ENCODE measurements at regions of chr17 and their contacts with region 1.

Region 1: GRCh38 chr17:40021451-40021971 is 6.3 kb downstream of the CSF3 start:
- DNase-seq: peak; percentile 56 to 80
- ATAC-seq: peak; percentile 57 to 72
- H3K4me3 ChIP-seq: no peak overlapping the region
- H3K27ac ChIP-seq: peak overlapping the region; percentile 83 to 84
- H3K4me1 ChIP-seq: peaks cover 43% of the 10 kb centered on the region
- CTCF ChIP-seq: no peak
- EP300 ChIP-seq: no peak
- POLR2A ChIP-seq: no peak
- RAD21 ChIP-seq: no peak

Region 2: GRCh38 chr17:39996800-39997199 is 24.7 kb before region 1 on chr17:
- CTCF ChIA-PET with region 1: interaction called, 625 read pairs
- POLR2A ChIA-PET with region 1: no interaction called
- DNase-seq: no peak
- ATAC-seq: no peak
- H3K4me3 ChIP-seq: no peak overlapping the region
- H3K27ac ChIP-seq: no peak overlapping the region
- H3K4me1 ChIP-seq: no peaks in the 10 kb centered on the region
- CTCF ChIP-seq: no peak
- EP300 ChIP-seq: no peak
- POLR2A ChIP-seq: no peak
- RAD21 ChIP-seq: no peak

Region 3: GRCh38 chr17:40005520-40005919 is 16.0 kb before region 1 on chr17:
- CTCF ChIA-PET with region 1: interaction called, 625 read pairs
- POLR2A ChIA-PET with region 1: interaction called, 3 read pairs
- DNase-seq: no peak
- ATAC-seq: 0 out of 6 replicates have a peak, but pooled peaks of 1 of the 2 experiments have one; percentile 32
- H3K4me3 ChIP-seq: no peak overlapping the region
- H3K27ac ChIP-seq: no peak overlapping the region
- H3K4me1 ChIP-seq: no peaks in the 10 kb centered on the region
- CTCF ChIP-seq: no peak
- EP300 ChIP-seq: no peak
- POLR2A ChIP-seq: no peak
- RAD21 ChIP-seq: no peak

Region 4: DNA sequence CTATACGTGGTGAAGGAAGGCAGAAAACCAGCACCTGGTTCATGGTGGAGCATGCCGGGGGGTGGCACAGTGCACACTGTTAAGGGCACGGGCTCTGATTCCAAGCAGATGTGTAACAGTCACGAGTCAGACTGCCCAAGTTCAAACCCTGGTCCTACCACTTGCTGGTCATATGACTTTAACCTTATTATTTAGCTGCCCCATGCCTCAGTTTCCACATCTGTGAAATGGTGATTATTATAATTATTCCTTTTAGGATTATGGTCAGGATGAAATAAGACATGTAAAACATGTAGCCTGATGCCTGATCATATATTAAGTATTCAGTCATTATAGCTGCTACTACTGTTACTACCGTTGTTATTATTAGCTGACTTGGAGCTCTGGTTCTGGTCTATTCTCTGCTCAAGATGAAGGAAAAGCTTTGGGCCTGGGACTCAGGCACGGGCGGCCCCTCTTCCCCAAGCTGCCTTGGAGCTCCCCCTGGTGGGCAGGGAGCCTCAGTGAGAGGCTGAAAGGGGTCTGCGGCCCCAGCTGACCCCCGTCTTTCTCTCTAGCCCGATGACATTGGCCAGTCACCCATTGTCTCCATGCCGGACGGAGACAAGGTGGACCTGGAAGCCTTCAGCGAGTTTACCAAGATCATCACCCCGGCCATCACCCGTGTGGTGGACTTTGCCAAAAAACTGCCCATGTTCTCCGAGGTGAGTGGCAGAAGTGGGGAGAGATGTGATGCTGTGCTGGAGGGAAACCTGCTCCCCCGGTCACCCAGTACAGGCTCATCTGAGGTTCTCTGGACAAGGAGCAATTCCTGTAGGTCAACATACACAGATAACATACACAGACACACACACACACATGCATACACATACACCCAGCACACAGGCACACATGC is 64.9 kb after region 1 on chr17:
- CTCF ChIA-PET with region 1: interaction called, 102 read pairs
- POLR2A ChIA-PET with region 1: no interaction called
- DNase-seq: peak; percentile 70 to 85
- ATAC-seq: peak; percentile 52 to 84; a peak in 4 of 6 replicates
- H3K4me3 ChIP-seq: no peak overlapping the region
- H3K27ac ChIP-seq: no peak overlapping the region
- H3K4me1 ChIP-seq: peaks cover 15% of the 10 kb centered on the region
- CTCF ChIP-seq: peak; percentile 95
- EP300 ChIP-seq: no peak
- POLR2A ChIP-seq: no peak
- RAD21 ChIP-seq: peak; percentile 97

Measured in A549 (cell line).